Esophagus squamous epithelium (tissue), 5 donors: ENCODE measurements at regions of chr12 and their contacts with region 1.

Region 1: DNA sequence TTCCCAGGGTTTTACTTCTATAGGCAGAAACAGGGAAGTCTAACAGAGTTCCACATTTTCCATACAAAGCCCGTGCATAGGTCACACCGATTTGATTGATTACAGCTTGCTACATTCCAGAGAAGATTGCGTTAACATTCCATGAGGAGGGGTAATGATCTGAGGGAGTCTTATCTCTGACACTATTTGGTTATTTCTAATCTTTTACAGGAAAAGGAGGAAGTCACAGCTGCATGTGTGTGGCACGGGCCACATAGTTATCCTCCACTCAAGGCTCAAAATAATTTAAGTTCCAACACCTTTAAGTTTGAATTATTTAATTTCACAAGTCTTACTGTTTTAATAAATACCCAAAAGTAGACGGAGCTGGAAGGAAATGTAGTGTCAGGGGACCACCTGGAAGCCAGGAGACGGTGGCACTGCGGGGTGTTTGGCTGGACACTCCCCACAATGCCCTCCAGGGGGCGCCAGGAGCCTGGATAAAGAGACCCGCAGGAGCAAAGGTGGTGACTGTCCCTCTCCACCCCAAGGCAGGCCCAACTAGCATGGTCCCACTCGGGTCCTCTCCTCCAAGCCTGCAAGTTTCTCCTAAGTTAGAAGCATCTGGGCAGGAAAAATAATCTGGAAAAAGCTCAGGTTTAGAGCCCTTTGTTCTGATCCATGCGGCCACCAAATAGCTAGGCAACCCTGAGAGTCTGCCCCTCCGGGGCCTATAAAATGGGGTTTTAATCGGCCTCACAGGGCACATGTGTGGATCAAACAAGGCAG is 20.2 kb downstream of the KRT8 start:
- DNase-seq: no peak
- H3K4me3 ChIP-seq: no peak overlapping the region
- H3K27ac ChIP-seq: no peak overlapping the region
- H3K4me1 ChIP-seq: peaks cover under 1 to 18% (median 1%) of the 10 kb centered on the region in 3 donors
- H3K27me3 ChIP-seq: peaks cover 0 to 8% (median 0%) of the 10 kb centered on the region in 4 donors
- CTCF ChIP-seq: peak; percentile 82 to 96 (median 93)
- POLR2A ChIP-seq: no peak

Region 2: GRCh38 chr12:52976147-52977071 is 91.7 kb after region 1 on chr12:
- intact Hi-C with region 1: loop called (anchors 2 kb)
- DNase-seq: no peak
- H3K4me3 ChIP-seq: no peak overlapping the region
- H3K27ac ChIP-seq: peak overlapping the region in 1 of 4 donors; percentile 44
- H3K4me1 ChIP-seq: peaks cover 0 to 13% (median 5%) of the 10 kb centered on the region in 3 donors
- H3K27me3 ChIP-seq: peaks cover 0 to 41% (median 0%) of the 10 kb centered on the region in 4 donors
- CTCF ChIP-seq: peak in 1 of 6 experiments; percentile 20
- POLR2A ChIP-seq: no peak